IMR-90 (cell line): ENCODE measurements at regions of chr13 and their contacts with region 1.

Region 1: DNA sequence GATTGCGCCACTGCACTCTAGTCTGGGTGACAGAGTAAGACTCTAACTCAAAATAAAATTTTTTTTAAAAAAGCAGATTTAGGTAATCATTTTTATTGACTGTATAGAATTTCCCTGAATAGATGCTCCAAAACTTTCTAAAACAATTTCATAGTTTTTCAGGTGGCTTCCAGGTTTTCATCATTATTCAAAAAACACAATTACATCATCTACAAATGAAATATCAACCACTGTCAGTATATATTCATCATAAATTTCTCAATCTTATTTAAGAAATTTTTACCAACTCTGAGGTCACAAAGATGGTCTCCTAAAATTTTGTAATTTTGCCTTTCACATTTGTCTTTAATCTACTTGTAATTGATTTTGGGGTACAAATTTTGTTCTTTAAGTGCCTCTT is 48.1 kb downstream of the ZC3H13 start:
- DNase-seq: no peak
- ATAC-seq: no peak
- H3K4me3 ChIP-seq: no peak overlapping the region
- H3K27ac ChIP-seq: no peak overlapping the region
- H3K4me1 ChIP-seq: no peaks in the 10 kb centered on the region
- H3K27me3 ChIP-seq: no peaks in the 10 kb centered on the region
- CTCF ChIP-seq: no peak
- POLR2A ChIP-seq: no peak
- RAD21 ChIP-seq: no peak

Region 2: GRCh38 chr13:45833656-45834375 is 170.7 kb before region 1 on chr13:
- CTCF ChIA-PET with region 1: no interaction called
- POLR2A ChIA-PET with region 1: no interaction called
- dilution Hi-C with region 1: no loop called
- in situ Hi-C with region 1: no loop called
- intact Hi-C with region 1: no loop called
- DNase-seq: peak; percentile 7
- ATAC-seq: no peak
- H3K4me3 ChIP-seq: no peak overlapping the region
- H3K27ac ChIP-seq: no peak overlapping the region
- H3K4me1 ChIP-seq: no peaks in the 10 kb centered on the region
- H3K27me3 ChIP-seq: peaks cover 3% of the 10 kb centered on the region
- CTCF ChIP-seq: no peak
- POLR2A ChIP-seq: no peak
- RAD21 ChIP-seq: no peak

Region 3: DNA sequence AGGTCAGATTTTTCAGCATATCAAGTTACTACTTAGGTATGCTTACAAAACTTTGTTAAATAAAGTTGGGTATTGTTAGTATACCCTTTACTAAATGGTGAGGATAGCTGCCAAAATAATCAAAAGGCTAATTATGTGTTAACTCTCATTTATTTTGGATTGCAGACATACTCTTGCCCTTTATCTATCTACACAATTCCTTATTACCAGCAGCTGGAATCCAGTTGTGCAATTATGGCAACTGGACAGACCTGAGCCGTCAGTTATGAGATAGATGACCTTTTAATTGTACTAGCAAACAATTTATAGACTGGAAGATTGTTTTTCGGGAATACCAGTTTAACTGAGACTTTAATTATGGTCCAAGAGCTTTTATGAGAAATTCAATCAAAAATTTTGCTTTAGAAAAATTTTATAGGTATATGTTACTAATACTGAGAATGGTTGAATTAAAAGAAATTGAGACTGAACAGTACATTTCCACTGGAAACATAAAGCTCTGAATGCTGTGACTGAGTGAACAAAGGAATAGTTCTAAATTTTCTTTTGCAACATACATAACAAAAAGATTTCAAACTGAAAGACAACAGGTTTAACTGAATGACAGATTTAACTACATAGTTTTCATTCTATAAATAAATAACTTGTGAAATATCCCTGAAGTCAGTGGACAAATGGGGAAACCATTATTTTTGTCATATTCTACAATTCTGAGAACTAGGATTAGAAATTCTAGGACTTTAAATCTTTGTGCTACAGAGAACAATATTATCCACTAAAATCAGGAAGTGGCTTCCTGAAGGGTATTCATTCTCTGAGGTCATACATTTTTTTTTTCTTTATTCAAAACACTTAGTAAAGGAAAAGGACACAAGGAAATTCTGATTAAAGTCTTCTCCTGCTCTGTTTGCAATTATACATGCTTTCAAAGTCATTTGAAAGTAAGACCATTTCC is 49.4 kb before region 1 on chr13:
- CTCF ChIA-PET with region 1: no interaction called
- POLR2A ChIA-PET with region 1: no interaction called
- dilution Hi-C with region 1: no loop called
- in situ Hi-C with region 1: no loop called
- intact Hi-C with region 1: loop called (anchors 5 kb)
- DNase-seq: no peak
- ATAC-seq: no peak
- H3K4me3 ChIP-seq: no peak overlapping the region
- H3K27ac ChIP-seq: no peak overlapping the region
- H3K4me1 ChIP-seq: no peaks in the 10 kb centered on the region
- H3K27me3 ChIP-seq: no peaks in the 10 kb centered on the region
- CTCF ChIP-seq: no peak
- POLR2A ChIP-seq: no peak
- RAD21 ChIP-seq: no peak